Posterior vena cava (tissue), 2 donors: ENCODE measurements at regions of chr2 and their contacts with region 1.

Region 1: DNA sequence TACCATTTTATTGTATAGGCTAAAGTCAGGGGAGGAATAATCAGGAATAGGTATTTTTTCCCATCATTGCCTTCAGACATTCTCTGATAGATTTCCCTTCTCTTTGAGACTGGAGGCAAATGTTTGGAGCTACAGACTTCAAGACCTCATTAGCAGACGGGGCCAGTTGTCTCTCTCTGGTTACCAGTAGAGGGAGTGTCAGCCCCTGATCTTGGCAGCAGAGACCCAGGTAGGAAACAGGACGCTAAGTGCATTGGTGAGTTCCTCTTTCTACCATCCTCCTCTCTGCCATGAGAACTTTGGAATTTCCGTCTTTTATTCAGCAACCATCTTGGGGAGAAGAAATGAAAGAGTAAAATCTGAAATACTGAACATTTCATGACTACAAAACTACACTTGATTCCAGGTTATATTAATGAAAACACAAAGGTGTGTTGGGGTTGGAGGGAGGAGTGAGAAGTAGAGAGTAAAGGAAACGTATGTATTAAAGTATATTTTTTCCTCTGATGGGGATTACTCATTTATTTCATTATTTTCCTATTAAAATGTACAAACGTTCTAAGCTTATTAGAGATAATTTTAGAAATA is 186.2 kb upstream of the GCFC2 start:
- DNase-seq: no peak

Region 2: DNA sequence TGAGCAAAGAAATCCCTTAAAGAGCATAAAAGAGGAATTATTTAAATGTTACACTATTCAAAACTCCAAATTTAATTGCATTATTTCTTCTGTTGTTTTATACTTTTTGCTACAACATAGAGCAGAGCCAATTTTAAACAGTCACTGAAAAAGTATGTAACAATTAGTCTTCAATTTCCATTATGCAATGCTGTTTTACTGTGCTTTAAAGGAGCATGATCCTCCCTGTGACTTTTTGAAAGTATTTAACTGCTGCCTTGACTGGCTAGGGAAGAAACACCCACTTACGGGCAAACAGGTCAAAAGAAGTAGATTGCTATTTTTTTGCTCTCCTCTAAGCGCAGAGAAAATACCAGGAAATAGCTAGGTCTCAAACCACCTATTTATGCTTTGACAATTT is 31.2 kb after region 1 on chr2:
- intact Hi-C with region 1: no loop called
- DNase-seq: no peak

Region 3: DNA sequence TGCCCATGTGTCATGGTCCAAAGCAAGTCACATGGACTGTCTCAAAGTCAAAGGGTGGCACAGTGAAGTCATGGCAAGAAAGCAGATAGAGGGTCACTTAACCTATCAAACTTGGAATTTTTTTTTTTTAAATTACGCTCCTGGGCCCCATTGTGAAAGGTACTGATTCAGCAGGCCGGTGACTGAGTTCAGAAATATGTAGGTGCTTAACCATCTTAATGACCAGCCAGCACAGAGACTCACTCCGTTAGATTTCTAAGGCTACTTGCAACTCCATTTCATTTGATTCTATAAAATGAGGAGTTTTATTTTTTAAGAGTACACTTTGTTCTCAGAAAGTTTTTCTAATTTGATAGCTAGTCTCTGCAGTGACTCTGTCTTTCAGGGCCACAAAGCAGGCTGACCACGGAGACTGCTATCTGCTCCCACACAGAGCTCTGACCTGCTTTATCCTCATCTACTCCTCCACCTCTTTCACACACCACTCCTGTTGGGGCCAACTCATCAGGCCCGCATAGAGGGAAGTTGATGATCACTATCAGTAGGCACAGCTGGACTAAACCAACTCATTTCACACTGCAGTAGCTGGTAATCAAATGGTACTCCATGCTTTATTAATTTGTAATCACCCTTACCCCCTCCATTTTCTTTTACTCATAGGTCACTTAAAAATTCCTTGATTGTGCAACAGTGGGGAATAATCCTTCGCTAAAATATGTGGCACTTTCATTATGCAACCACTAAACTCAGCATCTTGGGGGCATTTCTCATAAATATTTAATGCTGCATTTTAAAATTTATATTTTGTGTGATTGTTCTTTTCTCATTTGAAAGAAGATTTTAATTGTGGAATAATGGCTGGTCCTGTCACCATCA is 63.5 kb after region 1 on chr2:
- intact Hi-C with region 1: no loop called
- DNase-seq: no peak

Region 4: GRCh38 chr2:76759634-76760366 is 862.9 kb after region 1 on chr2:
- intact Hi-C with region 1: loop called in 1 of 2 experiments (anchors 5 kb)
- DNase-seq: no peak